Psoas muscle (tissue), 8 donors: ENCODE measurements at regions of chr17 and their contacts with region 1.

Region 1: GRCh38 chr17:28357061-28357900 is at the start of gene POLDIP2:
- DNase-seq: peak; percentile 96 to 98
- ATAC-seq: peak; percentile 99
- H3K4me3 ChIP-seq: peak within 1 kb of the TSS; percentile 100
- H3K27ac ChIP-seq: peak within 1 kb of the TSS; percentile 97
- H3K4me1 ChIP-seq: peaks cover 26% of the 10 kb centered on the region
- H3K27me3 ChIP-seq: no peaks in the 10 kb centered on the region
- CTCF ChIP-seq: no peak
- total RNA-seq, gene POLDIP2: 182 to 206 (median 190) TPM

Region 2: DNA sequence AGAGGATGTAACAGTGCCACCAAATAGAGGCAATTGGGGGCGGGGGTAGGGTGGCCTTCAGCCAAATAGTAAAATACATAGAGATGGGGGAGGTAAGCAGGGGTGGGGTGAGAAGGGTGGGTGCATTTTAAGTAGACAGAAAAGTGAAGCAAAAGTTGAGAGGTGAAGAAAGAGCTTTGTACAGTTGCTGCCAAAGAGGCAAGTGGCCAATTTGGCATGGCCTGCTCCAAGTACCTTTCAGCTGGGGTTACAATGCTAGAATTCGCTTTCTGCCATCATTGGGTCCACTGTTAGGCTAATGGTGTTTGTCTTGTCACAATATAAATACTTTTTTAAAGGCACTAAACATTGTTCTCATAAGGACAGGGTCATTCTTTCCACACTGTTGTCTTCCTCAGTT is 43.4 kb before region 1 on chr17:
- intact Hi-C with region 1: loop called in 1 of 2 experiments (anchors 2 kb)
- DNase-seq: no peak
- ATAC-seq: no peak
- H3K4me3 ChIP-seq: no peak overlapping the region
- H3K27ac ChIP-seq: no peak overlapping the region
- H3K4me1 ChIP-seq: peaks cover 8% of the 10 kb centered on the region
- H3K27me3 ChIP-seq: no peaks in the 10 kb centered on the region
- CTCF ChIP-seq: no peak

Region 3: DNA sequence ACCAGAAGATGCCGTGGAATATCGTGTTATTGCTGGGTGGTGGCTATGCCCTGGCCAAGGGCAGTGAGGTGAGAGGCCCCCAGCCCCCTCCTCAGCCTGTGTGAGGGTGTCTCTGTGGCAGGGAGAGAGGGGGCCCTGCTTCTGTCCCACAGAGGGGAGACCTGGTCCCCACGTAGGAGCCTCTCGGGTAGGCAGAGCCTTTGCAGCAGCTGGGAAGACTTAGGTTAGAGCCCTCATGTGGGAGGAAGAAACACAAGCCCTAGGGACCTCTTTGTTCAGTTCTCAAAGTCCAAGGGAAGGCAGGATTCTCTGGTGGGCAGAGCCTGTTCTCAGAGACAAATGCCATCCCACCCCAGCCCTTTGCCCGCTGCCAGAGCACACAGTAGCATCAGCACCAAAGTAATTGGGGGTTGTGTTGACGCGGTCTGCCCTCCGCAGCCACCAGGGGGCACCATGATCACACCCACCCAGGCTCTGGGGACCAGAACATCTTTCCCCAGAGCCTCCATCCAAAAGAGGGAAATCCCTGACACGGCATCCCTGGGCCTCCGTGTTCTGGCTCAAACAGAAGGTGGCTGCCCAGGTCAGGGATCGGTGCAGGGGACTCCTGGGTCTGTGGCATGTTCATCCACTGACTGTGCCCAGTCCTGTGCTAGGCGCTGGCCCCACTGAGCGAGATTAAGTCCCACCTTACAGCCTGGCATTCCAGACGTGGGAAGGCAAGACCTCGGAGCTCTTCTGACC is 137.3 kb after region 1 on chr17:
- intact Hi-C with region 1: no loop called
- DNase-seq: peak; percentile 65 to 82
- ATAC-seq: peak; percentile 63 to 79 (median 74)
- H3K4me3 ChIP-seq: no peak overlapping the region
- H3K27ac ChIP-seq: no peak overlapping the region
- H3K4me1 ChIP-seq: no peaks in the 10 kb centered on the region
- H3K27me3 ChIP-seq: peaks cover 0 to 6% (median 0%) of the 10 kb centered on the region in 3 donors
- CTCF ChIP-seq: peak; percentile 75